ENCODE measurements at regions of chr2 and their contacts with region 1.

Region 1: GRCh38 chr2:39227628-39228412 is 15.9 kb downstream of the CDKL4 start:
- DNase-seq: peak; percentile 53 to 66 (median 62)
- H3K4me3 ChIP-seq: peak overlapping the region in 2 of 3 experiments; percentile 21 to 62
- H3K4me3 Mint-ChIP-seq: peak overlapping the region; percentile 74 to 90
- H3K27ac ChIP-seq: no peak overlapping the region
- H3K27ac Mint-ChIP-seq: no peak overlapping the region
- H3K4me1 ChIP-seq: peaks cover 5 to 10% of the 10 kb centered on the region in 2 donors
- H3K4me1 Mint-ChIP-seq: peaks cover 11% of the 10 kb centered on the region
- H3K27me3 ChIP-seq: no peaks in the 10 kb centered on the region
- H3K27me3 Mint-ChIP-seq: peaks cover 0 to 2% (median 0%) of the 10 kb centered on the region in 3 donors
- CTCF ChIP-seq: peak; percentile 90

Region 2: DNA sequence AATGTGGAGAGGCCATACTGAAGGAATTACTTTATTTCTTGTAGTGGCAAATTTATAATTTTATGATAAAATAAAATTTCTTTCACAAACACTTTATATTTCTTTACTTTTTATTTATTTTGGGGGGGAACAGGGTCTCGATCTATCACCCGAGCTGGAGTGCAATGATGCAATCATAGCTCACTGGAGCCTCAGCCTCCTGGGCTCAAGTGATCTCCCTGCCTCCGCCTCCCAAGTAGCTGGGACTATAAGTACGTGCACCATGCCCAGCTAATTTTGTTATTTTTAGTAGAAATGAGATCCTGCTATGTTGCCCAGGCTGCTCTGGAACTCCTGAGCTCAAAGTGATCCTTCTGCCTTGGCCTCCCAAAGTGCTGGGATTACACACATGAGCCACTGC is 166.5 kb before region 1 on chr2:
- intact Hi-C with region 1: loop called (anchors 2 kb)
- DNase-seq: no peak
- H3K4me3 ChIP-seq: no peak overlapping the region
- H3K4me3 Mint-ChIP-seq: no peak overlapping the region
- H3K27ac ChIP-seq: no peak overlapping the region
- H3K27ac Mint-ChIP-seq: peak overlapping the region in 2 of 7 donors; percentile 35 to 50
- H3K4me1 ChIP-seq: no peaks in the 10 kb centered on the region
- H3K4me1 Mint-ChIP-seq: no peaks in the 10 kb centered on the region
- H3K27me3 ChIP-seq: no peaks in the 10 kb centered on the region
- H3K27me3 Mint-ChIP-seq: no peaks in the 10 kb centered on the region
- CTCF ChIP-seq: no peak

Region 3: GRCh38 chr2:39252888-39253518 is 25.2 kb after region 1 on chr2:
- intact Hi-C with region 1: no loop called
- DNase-seq: no peak
- H3K4me3 ChIP-seq: no peak overlapping the region
- H3K4me3 Mint-ChIP-seq: no peak overlapping the region
- H3K27ac ChIP-seq: no peak overlapping the region
- H3K27ac Mint-ChIP-seq: no peak overlapping the region
- H3K4me1 ChIP-seq: no peaks in the 10 kb centered on the region
- H3K4me1 Mint-ChIP-seq: no peaks in the 10 kb centered on the region
- H3K27me3 ChIP-seq: no peaks in the 10 kb centered on the region
- H3K27me3 Mint-ChIP-seq: no peaks in the 10 kb centered on the region
- CTCF ChIP-seq: no peak

Region 4: DNA sequence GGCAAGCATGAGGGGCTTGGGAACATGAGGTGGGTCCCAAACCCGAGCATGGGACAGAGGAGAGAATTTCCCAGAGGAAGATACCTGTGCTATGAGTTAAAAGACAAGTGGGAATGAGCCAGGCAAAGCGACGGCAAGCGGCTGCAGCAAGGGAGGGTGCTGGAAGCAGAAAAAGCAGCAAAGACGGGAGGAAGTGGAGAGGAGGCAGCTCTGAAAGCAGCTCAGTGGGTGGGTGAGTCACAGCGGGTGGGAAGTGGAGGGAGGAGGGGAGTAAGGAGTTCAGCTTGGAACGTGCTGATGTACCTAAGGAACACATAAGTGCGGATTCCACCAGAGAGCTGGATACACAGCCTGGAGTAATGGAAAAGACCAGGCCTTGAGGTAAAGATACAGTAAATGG is 509.8 kb after region 1 on chr2:
- intact Hi-C with region 1: no loop called
- DNase-seq: no peak
- H3K4me3 ChIP-seq: no peak overlapping the region
- H3K4me3 Mint-ChIP-seq: no peak overlapping the region
- H3K27ac ChIP-seq: no peak overlapping the region
- H3K27ac Mint-ChIP-seq: peak overlapping the region in 4 of 7 donors; percentile 40 to 70 (median 55)
- H3K4me1 ChIP-seq: no peaks in the 10 kb centered on the region
- H3K4me1 Mint-ChIP-seq: peaks cover 3% of the 10 kb centered on the region
- H3K27me3 ChIP-seq: no peaks in the 10 kb centered on the region
- H3K27me3 Mint-ChIP-seq: no peaks in the 10 kb centered on the region
- CTCF ChIP-seq: no peak